GM10248 (cell line): ENCODE measurements at regions of chr14 and their contacts with region 1.

Region 1: GRCh38 chr14:69460093-69460701 is 24.3 kb upstream of the PLEKHD1 start:
- DNase-seq: peak; percentile 68
- CTCF ChIP-seq: peak; percentile 87

Region 2: DNA sequence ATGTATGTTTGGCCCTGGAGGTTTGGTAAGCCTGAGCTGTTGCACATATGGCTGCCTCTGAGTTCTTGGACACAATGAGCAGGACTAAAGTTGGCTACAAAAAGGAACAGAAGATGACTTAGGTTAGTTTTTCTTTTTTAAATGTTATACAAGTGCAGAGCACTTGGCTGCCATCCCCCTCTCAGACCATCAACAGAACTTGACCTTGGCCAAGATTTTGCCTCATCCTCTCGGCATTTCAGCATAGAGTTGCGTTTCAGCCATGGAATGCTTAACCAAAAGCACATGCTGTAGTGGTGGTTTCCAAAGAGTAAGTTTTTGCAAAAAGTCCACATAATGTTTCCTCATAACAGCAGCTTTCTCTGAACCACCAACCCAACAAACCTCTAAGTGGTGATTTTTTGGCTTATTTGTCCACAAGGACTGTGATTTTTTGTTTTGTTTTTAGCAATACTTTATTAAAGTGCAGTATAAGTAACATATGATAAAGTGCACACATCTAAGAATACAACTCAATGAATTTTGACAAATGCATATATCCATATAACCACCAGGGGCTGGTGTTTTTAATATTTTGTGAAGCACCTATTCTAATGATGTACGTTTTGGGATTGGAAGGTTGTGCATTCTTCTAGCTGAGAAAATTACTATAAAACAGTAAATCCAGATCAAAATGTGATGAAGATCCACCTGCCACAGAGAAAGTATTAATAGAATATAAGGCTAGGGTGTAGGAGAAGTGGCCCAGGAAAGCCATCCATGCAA is 212.3 kb before region 1 on chr14:
- CTCF ChIA-PET with region 1: interaction called, 80 read pairs
- POLR2A ChIA-PET with region 1: no interaction called
- DNase-seq: no peak
- CTCF ChIP-seq: no peak

Region 3: GRCh38 chr14:69260861-69261564 is 199.2 kb before region 1 on chr14:
- CTCF ChIA-PET with region 1: interaction called, 52 read pairs
- POLR2A ChIA-PET with region 1: no interaction called
- DNase-seq: peak; percentile 89
- CTCF ChIP-seq: peak; percentile 63

Region 4: DNA sequence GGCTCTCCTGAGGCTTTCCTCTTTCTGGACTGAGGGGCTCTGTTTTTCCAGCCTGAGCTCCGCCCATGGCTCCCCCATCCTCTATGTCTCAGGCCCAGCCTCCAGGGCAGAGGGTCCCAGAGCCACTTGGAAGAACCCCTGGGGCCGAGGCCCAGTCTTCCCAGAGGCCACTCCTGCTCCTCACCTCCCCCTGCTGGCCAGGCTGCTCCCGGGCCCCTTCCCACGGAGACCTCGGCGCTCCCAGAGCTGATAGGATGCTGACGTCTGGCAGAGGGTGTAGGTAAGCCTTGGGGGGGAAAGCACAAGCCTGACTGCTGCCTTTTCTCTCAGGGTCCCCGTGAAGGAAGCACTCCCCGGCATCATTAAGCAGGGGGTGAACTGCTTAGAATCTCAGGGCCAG is 113.5 kb before region 1 on chr14:
- CTCF ChIA-PET with region 1: interaction called, 10 read pairs
- POLR2A ChIA-PET with region 1: no interaction called
- DNase-seq: peak; percentile 56
- CTCF ChIP-seq: peak; percentile 50

Region 5: GRCh38 chr14:69449216-69449615 is 11.0 kb before region 1 on chr14:
- CTCF ChIA-PET with region 1: interaction called, 15 read pairs
- POLR2A ChIA-PET with region 1: no interaction called
- DNase-seq: no peak
- CTCF ChIP-seq: no peak

Region 6: GRCh38 chr14:69475194-69475818 is 15.1 kb after region 1 on chr14:
- CTCF ChIA-PET with region 1: interaction called, 25 read pairs
- POLR2A ChIA-PET with region 1: no interaction called
- DNase-seq: peak; percentile 47
- CTCF ChIP-seq: peak; percentile 15

Region 7: DNA sequence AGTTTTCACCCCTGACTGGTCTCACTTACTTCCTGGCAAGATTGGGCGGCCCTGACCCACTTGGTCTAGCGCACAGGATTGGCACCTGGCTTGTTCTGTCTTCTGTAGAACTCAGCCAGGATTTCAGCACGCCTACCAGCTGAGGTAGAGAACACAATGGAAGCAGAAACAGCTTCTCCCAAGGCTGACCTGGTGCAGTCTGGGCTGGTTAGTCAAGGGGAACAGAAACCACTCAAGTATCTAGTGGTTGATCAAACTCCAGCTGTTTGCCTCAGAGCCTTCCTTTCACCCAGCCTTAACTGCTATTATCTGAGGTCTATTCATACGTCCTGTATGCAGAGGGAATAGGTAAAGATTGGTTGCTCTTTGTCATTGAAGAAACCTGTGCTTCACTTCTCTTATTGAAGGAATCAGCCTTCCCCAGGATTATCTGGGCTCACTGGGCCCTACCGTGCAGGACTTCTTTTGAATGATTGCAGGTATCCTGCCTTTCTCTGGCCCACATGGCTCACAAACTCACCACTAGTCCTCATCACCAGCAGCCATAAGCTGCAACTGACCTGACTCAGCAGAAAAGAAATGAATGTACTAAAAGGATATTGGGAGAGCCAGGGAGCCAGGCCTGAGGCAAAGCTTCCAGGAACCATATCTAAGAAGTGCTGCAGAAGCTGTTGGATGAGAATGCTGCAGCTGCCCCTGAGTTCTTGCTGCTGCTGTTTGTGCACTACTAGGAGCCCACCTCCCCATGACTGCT is 21.8 kb after region 1 on chr14:
- CTCF ChIA-PET with region 1: interaction called, 25 read pairs
- POLR2A ChIA-PET with region 1: no interaction called
- DNase-seq: peak; percentile 76
- CTCF ChIP-seq: no peak